OCI-LY7 (cell line): ENCODE measurements at regions of chr1 and their contacts with region 1.

Region 1: GRCh38 chr1:35769188-35769758 is 505 bp downstream of the CLSPN start:
- DNase-seq: peak; percentile 95
- H3K4me3 ChIP-seq: peak overlapping the region; percentile 91
- H3K27ac ChIP-seq: peak overlapping the region; percentile 90
- H3K4me1 ChIP-seq: peaks cover 15% of the 10 kb centered on the region
- CTCF ChIP-seq: peak; percentile 49

Region 2: DNA sequence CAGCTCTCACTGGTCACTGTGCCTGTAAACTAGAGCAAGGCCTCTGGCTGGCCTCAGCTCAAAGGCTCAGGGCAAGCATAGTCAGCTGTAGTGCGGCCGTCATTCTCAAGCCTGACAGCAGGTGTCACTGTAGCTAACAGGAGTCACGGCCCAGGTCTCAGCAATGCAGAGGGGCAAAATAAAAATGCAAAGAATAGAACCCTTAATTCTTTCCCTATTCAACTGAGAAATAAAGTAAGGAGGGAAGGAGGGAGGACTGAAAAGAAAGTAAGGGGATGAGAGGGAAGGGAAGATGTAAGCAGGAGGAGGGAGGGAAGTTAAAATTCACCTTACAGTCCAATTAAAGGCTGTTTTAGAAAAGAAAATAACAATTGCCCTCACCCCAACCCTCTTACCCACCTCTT is 318.1 kb before region 1 on chr1:
- CTCF ChIA-PET with region 1: no interaction called
- POLR2A ChIA-PET with region 1: no interaction called
- intact Hi-C with region 1: loop called (anchors 2 kb)
- DNase-seq: peak; percentile 72
- H3K4me3 ChIP-seq: no peak overlapping the region
- H3K27ac ChIP-seq: no peak overlapping the region
- H3K4me1 ChIP-seq: no peaks in the 10 kb centered on the region
- CTCF ChIP-seq: peak; percentile 91

Region 3: DNA sequence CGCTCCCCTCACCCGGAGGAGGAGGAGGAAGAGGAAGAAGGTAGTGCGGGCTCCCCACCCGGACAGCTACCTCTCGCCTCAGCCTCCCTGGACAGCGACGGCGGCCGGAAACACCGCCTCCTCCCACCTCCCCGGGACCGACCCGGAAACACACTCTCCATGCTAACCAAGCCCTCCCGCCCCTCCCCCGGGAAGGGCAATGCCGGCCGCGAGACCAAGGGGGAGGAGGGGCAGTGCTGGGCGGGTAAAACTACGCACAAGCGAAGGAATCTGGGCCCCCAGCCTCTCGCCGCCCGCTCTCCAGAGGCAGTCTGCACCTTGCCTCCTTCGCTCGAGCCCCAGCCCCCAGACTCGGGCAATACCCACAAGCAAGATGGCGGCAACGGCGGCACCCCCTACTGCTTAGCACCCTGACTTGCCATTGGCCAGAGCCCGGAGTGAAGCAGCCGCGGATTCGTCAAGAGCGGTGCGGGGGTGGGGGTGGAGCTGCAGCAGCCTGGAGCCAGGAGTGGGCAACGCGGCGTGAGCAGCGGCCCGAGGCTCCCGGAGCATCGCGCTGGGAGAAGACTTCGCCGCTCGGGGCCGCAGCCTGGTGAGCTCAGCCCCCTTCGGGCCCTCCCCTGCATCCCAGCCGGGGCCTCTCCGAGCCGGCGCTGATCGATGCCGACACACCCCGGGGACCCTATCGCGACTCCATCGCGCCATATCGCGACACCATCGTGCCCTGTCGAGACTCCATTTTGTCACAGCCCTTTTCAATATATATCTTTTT is 211.8 kb before region 1 on chr1 and contains the starts of genes KIAA0319L and NCDN:
- CTCF ChIA-PET with region 1: no interaction called
- POLR2A ChIA-PET with region 1: interaction called, 5 read pairs
- intact Hi-C with region 1: loop called (anchors 1 kb)
- DNase-seq: peak; percentile 97
- H3K4me3 ChIP-seq: peak within 1 kb of the TSS; percentile 99
- H3K27ac ChIP-seq: peak within 1 kb of the TSS; percentile 68
- H3K4me1 ChIP-seq: peaks cover 25% of the 10 kb centered on the region
- CTCF ChIP-seq: no peak
- total RNA-seq, gene KIAA0319L: 23.1 and 25.3 TPM in 2 replicates
- total RNA-seq, gene NCDN: 16.5 and 22.2 TPM in 2 replicates

Region 4: DNA sequence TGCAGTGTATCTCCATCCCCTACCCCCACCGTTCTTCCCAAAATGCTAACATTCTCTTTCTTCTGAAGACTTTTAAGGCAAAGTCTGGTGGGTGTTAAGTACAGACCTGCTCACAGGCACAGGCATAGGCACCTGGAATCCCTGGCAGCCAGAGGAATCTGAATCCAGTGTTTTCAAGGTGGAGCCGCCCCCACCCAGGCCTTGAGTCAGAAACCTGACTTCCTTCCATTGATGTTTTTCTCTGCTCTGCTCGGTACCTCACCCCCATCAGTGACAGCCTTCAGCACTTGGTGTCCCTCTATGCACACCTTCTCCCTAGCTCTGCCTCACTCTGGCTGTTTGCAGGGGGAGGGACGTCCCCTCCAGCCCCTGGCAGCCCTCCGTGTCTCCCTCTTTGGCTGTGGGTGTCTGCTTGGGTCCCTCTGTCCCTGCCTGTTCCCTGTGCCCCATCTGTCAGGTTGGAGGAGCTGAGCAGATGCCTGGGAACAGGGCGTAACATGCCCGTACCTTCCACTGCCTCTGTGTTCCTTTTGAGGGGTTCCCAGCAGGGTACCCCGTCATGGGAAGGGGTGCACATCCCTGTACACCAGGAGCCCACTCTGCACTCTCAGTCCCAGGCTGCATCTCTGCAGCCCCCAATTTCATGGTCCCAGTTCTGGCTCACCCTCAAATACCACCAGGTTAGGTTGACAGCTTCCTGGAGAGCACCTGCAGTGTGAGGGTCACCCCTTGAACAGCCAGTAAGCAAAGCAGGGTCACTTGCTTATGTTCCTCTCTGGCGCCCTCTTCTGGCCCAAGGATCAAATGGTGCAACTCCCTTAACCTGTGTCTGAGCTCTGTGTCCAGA is 205.0 kb before region 1 on chr1:
- CTCF ChIA-PET with region 1: no interaction called
- POLR2A ChIA-PET with region 1: interaction called, 5 read pairs
- intact Hi-C with region 1: loop called (anchors 1 kb)
- DNase-seq: peak; percentile 85
- H3K4me3 ChIP-seq: no peak overlapping the region
- H3K27ac ChIP-seq: no peak overlapping the region
- H3K4me1 ChIP-seq: no peaks in the 10 kb centered on the region
- CTCF ChIP-seq: peak; percentile 87

Region 5: GRCh38 chr1:35675773-35676172 is 93.5 kb before region 1 on chr1:
- CTCF ChIA-PET with region 1: no interaction called
- POLR2A ChIA-PET with region 1: no interaction called
- intact Hi-C with region 1: no loop called
- DNase-seq: no peak
- H3K4me3 ChIP-seq: no peak overlapping the region
- H3K27ac ChIP-seq: no peak overlapping the region
- H3K4me1 ChIP-seq: no peaks in the 10 kb centered on the region
- CTCF ChIP-seq: no peak

Region 6: GRCh38 chr1:35715568-35716002 is 53.7 kb before region 1 on chr1:
- CTCF ChIA-PET with region 1: no interaction called
- POLR2A ChIA-PET with region 1: interaction called, 5 read pairs
- intact Hi-C with region 1: loop called (anchors 1 kb)
- DNase-seq: peak; percentile 70
- H3K4me3 ChIP-seq: no peak overlapping the region
- H3K27ac ChIP-seq: no peak overlapping the region
- H3K4me1 ChIP-seq: no peaks in the 10 kb centered on the region
- CTCF ChIP-seq: peak; percentile 92

Region 7: GRCh38 chr1:35726450-35727433 is 42.5 kb before region 1 on chr1:
- CTCF ChIA-PET with region 1: interaction called, 3 read pairs
- POLR2A ChIA-PET with region 1: interaction called, 9 read pairs
- intact Hi-C with region 1: loop called (anchors 5 kb)
- DNase-seq: peak; percentile 45
- H3K4me3 ChIP-seq: no peak overlapping the region
- H3K27ac ChIP-seq: no peak overlapping the region
- H3K4me1 ChIP-seq: no peaks in the 10 kb centered on the region
- CTCF ChIP-seq: peak; percentile 84

Region 8: GRCh38 chr1:35930593-35931445 is 161.5 kb after region 1 on chr1 and contains the start of gene AGO3:
- CTCF ChIA-PET with region 1: no interaction called
- POLR2A ChIA-PET with region 1: no interaction called
- intact Hi-C with region 1: no loop called
- DNase-seq: peak; percentile 91
- H3K4me3 ChIP-seq: peak within 1 kb of the TSS; percentile 93
- H3K27ac ChIP-seq: peak within 1 kb of the TSS; percentile 83
- H3K4me1 ChIP-seq: peaks cover 42% of the 10 kb centered on the region
- CTCF ChIP-seq: no peak
- total RNA-seq, gene AGO3: 22.5 and 25.1 TPM in 2 replicates

Region 9: GRCh38 chr1:36274201-36274600 is 504.9 kb after region 1 on chr1:
- CTCF ChIA-PET with region 1: no interaction called
- POLR2A ChIA-PET with region 1: interaction called, 11 read pairs
- intact Hi-C with region 1: no loop called
- DNase-seq: no peak
- H3K4me3 ChIP-seq: no peak overlapping the region
- H3K27ac ChIP-seq: no peak overlapping the region
- H3K4me1 ChIP-seq: no peaks in the 10 kb centered on the region
- CTCF ChIP-seq: no peak